Sciatic nerve (tissue), 2 donors: ENCODE measurements at regions of chr2 and their contacts with region 1.

Region 1: DNA sequence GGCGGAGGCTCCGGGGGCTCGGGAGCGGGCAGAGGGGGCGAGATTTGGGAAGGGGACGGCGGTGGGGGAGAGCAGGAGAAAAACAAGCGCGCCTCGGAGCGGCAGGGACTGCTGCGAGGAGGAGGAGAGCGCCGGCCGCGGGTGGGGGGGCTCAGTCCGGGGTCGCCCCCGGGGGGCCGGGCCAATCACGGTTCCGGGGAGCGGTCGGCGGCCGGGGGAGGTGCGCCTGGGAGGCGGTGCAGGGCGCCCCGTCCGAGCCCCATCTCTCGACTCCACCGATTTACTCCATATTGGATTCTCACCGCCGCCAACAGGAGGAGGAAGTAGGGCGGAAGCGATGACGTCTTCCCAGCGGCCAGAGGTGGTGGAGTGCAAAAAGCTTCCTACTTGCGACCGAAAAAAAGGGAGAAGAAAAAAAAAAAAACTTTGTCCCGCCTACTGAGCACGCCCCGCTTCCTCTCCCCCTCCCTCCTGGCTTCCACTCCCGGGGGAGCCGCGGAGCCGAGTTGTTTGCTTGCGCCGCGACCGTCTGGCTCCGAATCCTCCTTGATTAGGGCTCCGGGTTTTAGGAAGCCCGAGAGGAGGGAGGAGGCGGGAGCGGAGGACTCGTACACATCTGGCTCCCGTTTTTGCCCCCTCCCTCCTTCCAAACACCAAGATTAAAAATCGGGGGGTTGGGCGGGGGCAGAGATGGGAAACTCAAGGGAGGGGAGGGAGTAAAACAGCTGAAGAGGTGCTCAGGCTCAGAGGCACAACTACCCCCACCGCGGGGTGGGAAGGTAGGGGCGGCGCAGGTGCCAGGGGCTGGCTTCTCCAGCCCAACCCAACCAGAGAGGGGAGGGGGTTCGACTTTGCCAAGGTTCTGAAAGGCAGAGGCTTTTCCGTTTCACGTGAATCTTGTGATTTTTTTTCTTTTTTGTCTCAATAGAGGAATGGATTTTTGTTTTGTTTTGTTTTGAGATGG is at the start of gene SPRED2:
- DNase-seq: peak; percentile 97
- ATAC-seq: peak; percentile 84
- total RNA-seq, gene SPRED2: 64.7 TPM

Region 2: DNA sequence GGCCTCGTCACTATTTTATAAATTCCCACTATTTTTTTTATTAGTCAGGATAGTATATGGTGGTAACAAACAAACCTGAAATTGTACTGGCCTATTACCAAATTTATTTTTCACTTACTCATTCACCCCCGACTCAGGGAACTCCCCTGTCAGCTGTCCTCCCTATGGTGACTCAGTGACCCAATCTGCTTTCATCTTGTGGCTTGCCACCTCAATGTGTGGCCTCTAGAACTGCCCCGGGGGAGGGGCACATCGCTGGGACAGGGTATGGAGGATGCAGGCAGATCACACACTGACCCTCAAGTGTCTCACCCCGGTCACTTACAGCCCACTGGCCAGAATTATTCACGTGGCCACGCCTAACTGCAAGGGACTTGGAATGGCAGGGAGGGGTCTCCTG is 133.3 kb before region 1 on chr2:
- intact Hi-C with region 1: loop called (anchors 10 kb)
- DNase-seq: no peak
- ATAC-seq: no peak

Region 3: GRCh38 chr2:65309708-65310107 is 122.8 kb before region 1 on chr2:
- intact Hi-C with region 1: no loop called
- DNase-seq: no peak
- ATAC-seq: peak; percentile 16

Region 4: GRCh38 chr2:65638443-65638842 is 205.9 kb after region 1 on chr2:
- intact Hi-C with region 1: no loop called
- DNase-seq: no peak
- ATAC-seq: no peak